Activated naive CD4-positive, alpha-beta T cell treated with anti-CD3 and anti-CD28 coated beads for 36 hours (primary cell): ENCODE measurements at regions of chr13 and their contacts with region 1.

Region 1: DNA sequence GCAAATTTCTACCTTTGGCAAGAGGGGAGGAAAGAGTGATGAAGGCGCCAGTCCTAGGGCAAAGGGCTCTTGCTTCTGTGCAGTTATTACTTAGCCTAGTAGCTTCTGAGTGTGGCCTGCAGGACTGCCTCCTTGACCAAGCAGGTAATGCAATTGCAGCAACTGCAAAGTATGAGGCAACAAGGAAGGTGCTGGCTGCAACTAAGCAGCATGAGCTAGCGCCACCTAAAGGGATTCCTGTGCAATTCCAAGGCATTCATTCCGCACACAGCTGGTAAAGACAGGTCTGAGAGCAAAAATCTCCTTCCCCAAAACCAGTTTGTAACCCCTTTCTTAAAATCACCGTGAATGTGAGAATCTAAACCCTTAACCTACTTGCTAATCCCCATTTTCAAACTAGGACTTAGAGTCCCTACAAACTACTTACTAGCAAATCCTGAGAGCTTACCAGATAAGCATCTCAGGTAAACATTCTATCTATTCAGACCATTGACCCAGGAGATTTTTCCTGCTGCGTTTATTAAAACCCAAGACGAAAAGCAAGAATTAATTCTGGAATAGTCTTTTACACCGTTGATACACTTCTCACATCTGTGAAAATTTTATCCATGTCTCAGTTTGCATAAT is 62.9 kb downstream of the DCT start:
- DNase-seq: no peak
- H3K4me3 Mint-ChIP-seq: no peak overlapping the region
- H3K27ac Mint-ChIP-seq: no peak overlapping the region
- H3K4me1 Mint-ChIP-seq: peaks cover 49% of the 10 kb centered on the region
- H3K27me3 Mint-ChIP-seq: no peaks in the 10 kb centered on the region

Region 2: DNA sequence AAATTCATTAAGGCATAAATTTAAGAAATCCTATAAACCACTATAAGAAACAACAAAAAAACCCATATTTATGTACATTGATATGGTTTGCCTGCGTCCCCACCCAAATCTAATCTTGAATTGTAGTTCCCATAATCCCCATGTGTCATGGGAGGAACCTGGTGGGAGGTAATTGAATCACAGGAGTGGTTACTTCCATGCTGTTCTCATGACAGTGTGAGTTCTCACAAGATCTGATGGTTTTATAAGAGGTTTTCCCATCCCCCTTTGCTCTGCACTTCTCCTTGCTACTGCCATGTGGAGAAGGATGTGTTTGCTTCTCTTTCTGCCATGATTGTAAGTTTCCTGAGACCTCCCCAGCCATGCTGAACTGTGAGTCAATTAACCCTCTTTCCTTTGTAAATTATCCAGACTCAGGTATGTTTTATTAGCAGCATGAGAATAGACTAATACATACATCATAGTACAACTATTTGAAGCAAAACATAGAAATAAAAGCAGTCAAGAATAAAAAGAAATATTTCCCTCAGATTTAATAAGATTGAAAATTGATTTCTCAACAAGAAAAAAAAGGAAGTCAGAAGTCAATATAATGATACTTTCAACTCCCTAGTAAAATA is 1399.0 kb before region 1 on chr13:
- CTCF ChIA-PET with region 1: no interaction called
- intact Hi-C with region 1: no loop called
- DNase-seq: no peak
- H3K4me3 Mint-ChIP-seq: no peak overlapping the region
- H3K27ac Mint-ChIP-seq: no peak overlapping the region
- H3K4me1 Mint-ChIP-seq: no peaks in the 10 kb centered on the region
- H3K27me3 Mint-ChIP-seq: no peaks in the 10 kb centered on the region

Region 3: DNA sequence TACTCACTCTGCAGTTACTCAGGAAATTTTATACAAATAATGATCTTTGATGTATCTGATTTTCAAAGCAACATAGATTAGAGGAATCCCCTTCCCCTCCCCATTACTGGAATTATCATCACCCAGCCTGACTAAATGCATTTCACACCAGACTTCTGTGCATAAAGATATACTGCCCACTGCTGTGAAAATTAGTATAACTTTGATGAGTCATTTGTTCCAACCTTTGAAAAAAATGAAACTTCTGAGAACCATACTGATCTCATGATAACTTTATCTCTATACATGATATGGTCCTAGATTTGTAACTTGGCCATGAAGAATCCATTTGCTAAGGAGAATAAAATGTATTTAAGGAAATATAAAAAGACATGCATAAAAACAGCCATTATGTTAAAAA is 1126.1 kb before region 1 on chr13:
- CTCF ChIA-PET with region 1: no interaction called
- intact Hi-C with region 1: loop called (anchors 5 kb)
- DNase-seq: no peak
- H3K4me3 Mint-ChIP-seq: no peak overlapping the region
- H3K27ac Mint-ChIP-seq: no peak overlapping the region
- H3K4me1 Mint-ChIP-seq: peaks cover 8% of the 10 kb centered on the region
- H3K27me3 Mint-ChIP-seq: peaks cover 2% of the 10 kb centered on the region

Region 4: GRCh38 chr13:94327318-94327717 is 89.2 kb before region 1 on chr13:
- CTCF ChIA-PET with region 1: no interaction called
- intact Hi-C with region 1: loop called (anchors 1 kb)
- DNase-seq: no peak
- H3K4me3 Mint-ChIP-seq: no peak overlapping the region
- H3K27ac Mint-ChIP-seq: no peak overlapping the region
- H3K4me1 Mint-ChIP-seq: peaks cover 73% of the 10 kb centered on the region
- H3K27me3 Mint-ChIP-seq: peaks cover 5% of the 10 kb centered on the region

Region 5: GRCh38 chr13:94369972-94370436 is 46.6 kb before region 1 on chr13:
- CTCF ChIA-PET with region 1: no interaction called
- intact Hi-C with region 1: no loop called
- DNase-seq: no peak
- H3K4me3 Mint-ChIP-seq: no peak overlapping the region
- H3K27ac Mint-ChIP-seq: no peak overlapping the region
- H3K4me1 Mint-ChIP-seq: no peaks in the 10 kb centered on the region
- H3K27me3 Mint-ChIP-seq: peaks cover 17% of the 10 kb centered on the region

Region 6: DNA sequence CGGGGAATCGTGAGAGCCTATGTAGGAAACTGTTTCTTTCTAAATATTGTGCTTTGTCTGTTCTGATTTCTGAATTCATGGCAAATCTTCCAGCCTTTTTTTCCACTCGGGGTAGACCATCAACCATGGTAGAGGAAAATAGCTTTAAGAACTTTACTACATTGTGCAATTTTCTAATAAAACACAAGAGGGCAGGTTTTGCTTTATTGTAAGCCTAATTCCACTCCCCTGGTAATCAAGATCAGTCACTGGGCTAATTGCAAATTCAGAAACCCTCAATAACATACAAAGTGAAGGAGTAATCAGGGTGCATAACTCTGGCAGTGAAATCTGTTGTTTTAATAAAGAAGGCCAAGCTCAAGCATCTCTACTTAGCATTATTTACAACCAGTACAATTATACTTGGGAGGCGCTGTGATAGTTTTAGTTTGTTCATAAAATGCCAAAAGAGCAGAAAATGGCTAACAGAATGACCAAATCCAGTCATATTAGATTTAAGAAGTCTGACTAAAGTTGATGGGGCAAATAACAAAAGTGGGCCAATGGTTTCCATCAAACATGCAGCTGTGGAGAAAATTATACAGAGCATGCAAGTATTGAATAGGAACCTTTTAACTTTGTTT is 19.1 kb after region 1 on chr13:
- CTCF ChIA-PET with region 1: interaction called, 5 read pairs
- intact Hi-C with region 1: loop called (anchors 1 kb)
- DNase-seq: no peak
- H3K4me3 Mint-ChIP-seq: no peak overlapping the region
- H3K27ac Mint-ChIP-seq: no peak overlapping the region
- H3K4me1 Mint-ChIP-seq: peaks cover 28% of the 10 kb centered on the region
- H3K27me3 Mint-ChIP-seq: no peaks in the 10 kb centered on the region

Region 7: GRCh38 chr13:94480672-94481145 is 64.1 kb after region 1 on chr13:
- CTCF ChIA-PET with region 1: no interaction called
- intact Hi-C with region 1: no loop called
- DNase-seq: no peak
- H3K4me3 Mint-ChIP-seq: no peak overlapping the region
- H3K27ac Mint-ChIP-seq: no peak overlapping the region
- H3K4me1 Mint-ChIP-seq: no peaks in the 10 kb centered on the region
- H3K27me3 Mint-ChIP-seq: peaks cover 3% of the 10 kb centered on the region

Region 8: DNA sequence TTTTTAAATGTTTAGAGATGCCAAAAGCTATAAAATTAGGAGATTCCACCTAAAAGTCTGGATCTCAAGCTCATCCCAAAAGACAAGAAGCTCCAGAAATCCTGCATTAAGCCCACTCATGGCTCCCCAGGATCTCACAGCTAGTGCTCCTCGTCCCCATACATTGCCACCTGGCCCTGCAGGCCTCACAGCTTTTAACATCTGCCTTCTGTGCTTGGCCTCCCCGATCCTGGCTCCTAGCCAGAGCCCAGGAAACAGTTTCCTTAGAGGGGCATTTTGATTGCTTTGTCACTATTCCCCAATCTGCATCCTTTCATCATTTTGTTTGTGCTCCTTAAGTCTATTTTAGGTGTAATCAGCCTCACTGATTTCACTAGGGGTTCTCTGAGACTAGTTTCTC is 77.5 kb after region 1 on chr13:
- CTCF ChIA-PET with region 1: no interaction called
- intact Hi-C with region 1: no loop called
- DNase-seq: no peak
- H3K4me3 Mint-ChIP-seq: no peak overlapping the region
- H3K27ac Mint-ChIP-seq: no peak overlapping the region
- H3K4me1 Mint-ChIP-seq: no peaks in the 10 kb centered on the region
- H3K27me3 Mint-ChIP-seq: no peaks in the 10 kb centered on the region

Region 9: GRCh38 chr13:94595950-94596574 is 179.5 kb after region 1 on chr13 and contains the start of gene TGDS:
- CTCF ChIA-PET with region 1: no interaction called
- intact Hi-C with region 1: loop called (anchors 1 kb)
- DNase-seq: peak; percentile 92
- H3K4me3 Mint-ChIP-seq: peak within 1 kb of the TSS; percentile 92
- H3K27ac Mint-ChIP-seq: peak within 1 kb of the TSS; percentile 88
- H3K4me1 Mint-ChIP-seq: peaks cover 32% of the 10 kb centered on the region
- H3K27me3 Mint-ChIP-seq: no peaks in the 10 kb centered on the region
- total RNA-seq, gene TGDS: 14.0 to 15.5 TPM

Region 10: DNA sequence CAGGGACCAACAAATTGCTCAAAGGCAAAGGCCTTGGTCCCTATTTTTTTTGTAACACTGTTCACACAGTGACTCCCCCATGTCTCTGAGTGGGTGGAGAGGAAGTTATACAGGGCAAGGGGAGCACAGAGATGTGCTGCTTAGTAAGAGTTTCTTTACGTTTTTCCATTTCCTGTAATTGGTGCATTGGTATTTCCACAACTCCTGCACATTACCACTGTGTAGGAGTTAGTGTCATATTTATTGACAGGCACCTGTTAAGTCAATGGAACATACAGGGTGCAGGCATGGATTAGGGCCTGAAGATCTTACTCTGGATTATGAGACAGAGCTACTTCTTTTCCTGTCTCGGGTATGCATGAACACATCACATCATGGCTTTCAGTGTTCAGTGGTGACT is 250.6 kb after region 1 on chr13:
- CTCF ChIA-PET with region 1: no interaction called
- intact Hi-C with region 1: loop called (anchors 1 kb)
- DNase-seq: peak; percentile 32
- H3K4me3 Mint-ChIP-seq: no peak overlapping the region
- H3K27ac Mint-ChIP-seq: peak overlapping the region; percentile 82
- H3K4me1 Mint-ChIP-seq: peaks cover 35% of the 10 kb centered on the region
- H3K27me3 Mint-ChIP-seq: peaks cover 9% of the 10 kb centered on the region

Region 11: GRCh38 chr13:95301183-95301967 is 884.8 kb after region 1 on chr13 and contains the start of gene ABCC4:
- CTCF ChIA-PET with region 1: no interaction called
- intact Hi-C with region 1: loop called (anchors 5 kb)
- DNase-seq: peak; percentile 53
- H3K4me3 Mint-ChIP-seq: peak within 1 kb of the TSS; percentile 80
- H3K27ac Mint-ChIP-seq: peak within 1 kb of the TSS; percentile 51
- H3K4me1 Mint-ChIP-seq: peaks cover 39% of the 10 kb centered on the region
- H3K27me3 Mint-ChIP-seq: peaks cover 7% of the 10 kb centered on the region
- total RNA-seq, gene ABCC4: 8.0 to 8.1 TPM